ENCODE measurements at regions of chr6 and their contacts with region 1.

Region 1: DNA sequence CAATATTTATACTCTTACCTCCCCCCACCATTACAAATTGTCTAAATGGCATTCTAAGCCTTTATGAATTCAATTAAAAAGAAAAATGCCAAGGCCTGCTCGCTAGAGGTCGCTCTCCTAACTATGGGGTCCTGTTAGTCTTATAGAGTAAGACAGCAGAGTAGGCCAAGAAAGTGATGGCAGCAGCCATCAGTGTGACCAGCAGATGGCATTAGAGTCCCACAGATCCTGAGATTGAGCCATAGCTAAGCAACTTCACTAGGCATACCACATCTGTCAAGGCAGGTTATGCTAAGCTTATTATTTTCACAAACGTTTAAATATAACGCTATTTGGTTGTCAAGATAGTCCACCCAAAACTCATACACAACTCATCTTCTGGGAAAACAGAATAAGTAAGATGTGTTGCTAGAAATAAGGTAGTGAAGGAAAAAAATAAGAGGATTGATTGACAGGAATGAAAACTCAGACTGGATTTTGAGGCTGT is 57.6 kb upstream of the SCAF8 start:
- H3K4me3 Mint-ChIP-seq: no peak overlapping the region
- H3K27ac Mint-ChIP-seq: no peak overlapping the region
- H3K4me1 Mint-ChIP-seq: no peaks in the 10 kb centered on the region
- H3K27me3 Mint-ChIP-seq: no peaks in the 10 kb centered on the region

Region 2: DNA sequence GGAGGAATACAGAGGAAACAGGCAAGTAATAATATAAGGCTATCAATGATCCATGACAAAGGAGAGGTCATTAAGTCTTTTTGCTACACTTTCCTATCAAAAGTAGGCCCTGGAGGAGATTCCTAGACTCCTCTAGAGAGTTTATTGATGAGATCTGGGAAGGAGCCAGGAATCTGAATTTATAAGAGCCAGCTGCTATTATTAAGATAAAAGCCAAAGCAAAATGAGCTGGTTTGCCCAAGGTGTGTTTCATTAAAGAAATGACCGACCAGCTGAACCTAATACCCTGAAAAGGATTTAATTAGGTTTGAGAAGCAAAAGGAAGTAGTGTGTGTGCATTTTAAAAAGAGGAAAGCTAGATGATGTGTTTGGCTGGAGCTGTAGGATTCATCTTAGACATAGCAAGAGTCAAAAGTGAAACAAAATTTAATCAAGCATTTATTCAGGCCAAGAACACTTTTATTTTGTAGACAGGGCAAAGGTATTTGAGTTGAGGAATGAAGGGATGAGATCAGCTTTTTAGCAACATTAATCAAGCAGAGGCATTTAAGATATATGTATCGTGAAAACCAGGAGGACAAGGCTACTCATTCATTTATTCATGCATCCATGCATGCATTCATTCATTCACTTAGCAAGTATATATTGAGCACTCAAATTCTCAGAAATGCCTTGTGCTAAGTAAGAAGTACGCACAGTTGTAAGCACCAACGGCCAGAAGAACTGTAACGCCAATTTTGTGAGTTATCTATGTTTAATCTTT is 14.0 kb after region 1 on chr6:
- intact Hi-C with region 1: no loop called
- H3K4me3 Mint-ChIP-seq: no peak overlapping the region
- H3K27ac Mint-ChIP-seq: no peak overlapping the region
- H3K4me1 Mint-ChIP-seq: no peaks in the 10 kb centered on the region
- H3K27me3 Mint-ChIP-seq: peaks cover 2% of the 10 kb centered on the region

Region 3: DNA sequence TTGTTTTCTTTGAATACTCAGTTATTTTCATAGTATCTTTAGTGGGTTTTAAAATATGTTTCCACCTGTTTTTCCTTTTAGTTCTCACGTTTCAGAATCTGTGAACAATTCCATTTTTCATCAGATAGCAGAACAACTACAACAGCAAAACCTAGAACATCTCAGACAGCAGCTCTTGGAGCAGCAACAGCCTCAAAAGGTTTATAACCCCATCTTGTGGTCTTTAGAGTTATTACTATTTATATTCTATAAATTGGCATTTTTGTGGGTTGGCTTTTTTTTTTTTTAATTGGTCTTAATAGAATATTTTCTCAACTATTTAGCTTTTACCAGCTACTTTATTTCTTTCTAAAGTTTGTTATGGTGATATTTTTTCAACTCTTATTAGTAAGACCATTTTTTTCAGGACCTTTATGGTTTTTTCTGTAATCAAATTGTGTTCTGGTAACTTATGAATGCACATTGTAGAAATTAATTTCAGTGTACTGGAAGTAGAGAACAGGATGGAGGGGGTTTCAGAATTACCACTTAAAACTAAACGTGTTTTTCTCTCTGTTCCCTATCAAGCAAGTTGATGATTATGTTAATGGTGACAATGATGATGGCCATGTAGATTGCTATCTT is 129.8 kb after region 1 on chr6:
- intact Hi-C with region 1: loop called (anchors 1 kb)
- H3K4me3 Mint-ChIP-seq: no peak overlapping the region
- H3K27ac Mint-ChIP-seq: no peak overlapping the region
- H3K4me1 Mint-ChIP-seq: peaks cover 2% of the 10 kb centered on the region
- H3K27me3 Mint-ChIP-seq: no peaks in the 10 kb centered on the region

Measured in dendritic cell treated with granulocyte-macrophage colony-stimulating factor and Interleukin-4, amounts not matched to agents 40 ng/mL and 50 ng/mL, for 4 days (primary cell).